Adrenal gland (tissue), 19 donors: ENCODE measurements at regions of chr14 and their contacts with region 1.

Region 1: DNA sequence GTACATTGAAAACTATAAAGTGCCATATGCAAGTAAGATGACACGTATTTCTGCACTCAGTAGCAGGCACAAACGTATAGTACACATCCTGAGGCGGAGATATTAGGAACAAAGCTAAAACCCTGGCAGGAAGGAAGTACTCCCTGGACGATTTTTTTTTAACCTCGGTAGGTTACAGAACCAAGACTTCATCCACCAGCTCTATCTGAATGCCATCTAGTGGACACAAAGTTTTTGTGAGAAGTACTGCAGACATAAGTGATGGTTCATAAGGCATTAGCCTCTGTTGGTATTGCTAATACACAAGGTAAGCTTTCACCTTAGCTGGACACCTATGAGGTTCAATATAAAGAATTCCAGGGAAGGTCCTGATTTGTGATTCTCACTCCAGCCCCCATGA is 83.0 kb upstream of the CCDC196 start:
- DNase-seq: no peak
- H3K4me3 ChIP-seq: no peak overlapping the region
- H3K27ac ChIP-seq: no peak overlapping the region
- H3K4me1 ChIP-seq: no peaks in the 10 kb centered on the region
- H3K27me3 ChIP-seq: no peaks in the 10 kb centered on the region
- CTCF ChIP-seq: peak; percentile 35 to 58 (median 48)
- POLR2A ChIP-seq: no peak

Region 2: GRCh38 chr14:66359500-66359899 is 43.7 kb before region 1 on chr14:
- intact Hi-C with region 1: loop called in 1 of 2 experiments (anchors 5 kb)
- DNase-seq: peak in 2 of 7 donors; percentile 11 to 15
- H3K4me3 ChIP-seq: no peak overlapping the region
- H3K27ac ChIP-seq: no peak overlapping the region
- H3K4me1 ChIP-seq: no peaks in the 10 kb centered on the region
- H3K27me3 ChIP-seq: no peaks in the 10 kb centered on the region
- CTCF ChIP-seq: peak; percentile 40 to 82 (median 66)
- POLR2A ChIP-seq: no peak